Activated naive CD4-positive, alpha-beta T cell treated with anti-CD3 and anti-CD28 coated beads for 36 hours (primary cell): ENCODE measurements at regions of chr13 and their contacts with region 1.

Region 1: GRCh38 chr13:99886706-99887105 is 84.9 kb downstream of the ZIC5 start:
- DNase-seq: no peak
- H3K4me3 Mint-ChIP-seq: no peak overlapping the region
- H3K27ac Mint-ChIP-seq: no peak overlapping the region
- H3K4me1 Mint-ChIP-seq: no peaks in the 10 kb centered on the region
- H3K27me3 Mint-ChIP-seq: no peaks in the 10 kb centered on the region

Region 2: DNA sequence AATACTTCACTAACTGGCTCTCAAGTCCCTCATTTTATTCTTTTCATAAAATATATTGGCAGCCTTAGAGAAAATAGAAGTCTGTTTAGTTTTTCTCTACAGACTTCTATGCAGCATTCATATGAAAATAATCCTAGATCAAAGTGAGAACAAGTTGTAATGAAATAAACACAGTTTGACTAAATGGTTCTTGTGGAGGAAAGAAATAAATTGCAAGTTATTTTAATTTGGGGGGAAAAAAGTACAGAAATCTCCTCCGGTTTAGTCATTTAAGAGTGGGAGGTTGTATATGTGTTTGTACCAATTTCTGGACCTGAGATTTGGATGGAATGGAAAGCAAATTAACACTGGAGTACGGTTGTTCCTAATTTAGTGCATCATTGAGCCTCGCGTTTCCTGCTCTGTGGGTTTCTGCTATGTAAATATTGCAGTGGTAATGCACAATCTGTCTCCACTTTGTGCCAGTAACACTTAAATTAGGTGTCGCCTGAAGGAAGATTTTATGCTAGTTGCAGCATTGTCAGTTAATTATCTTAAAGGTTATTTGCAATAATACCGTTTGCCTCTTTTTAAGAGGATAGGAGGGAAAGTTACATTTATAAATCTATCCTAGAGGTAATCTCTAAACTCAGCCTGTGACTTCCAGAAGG is 15.3 kb before region 1 on chr13:
- CTCF ChIA-PET with region 1: no interaction called
- intact Hi-C with region 1: no loop called
- DNase-seq: no peak
- H3K4me3 Mint-ChIP-seq: no peak overlapping the region
- H3K27ac Mint-ChIP-seq: no peak overlapping the region
- H3K4me1 Mint-ChIP-seq: no peaks in the 10 kb centered on the region
- H3K27me3 Mint-ChIP-seq: no peaks in the 10 kb centered on the region

Region 3: DNA sequence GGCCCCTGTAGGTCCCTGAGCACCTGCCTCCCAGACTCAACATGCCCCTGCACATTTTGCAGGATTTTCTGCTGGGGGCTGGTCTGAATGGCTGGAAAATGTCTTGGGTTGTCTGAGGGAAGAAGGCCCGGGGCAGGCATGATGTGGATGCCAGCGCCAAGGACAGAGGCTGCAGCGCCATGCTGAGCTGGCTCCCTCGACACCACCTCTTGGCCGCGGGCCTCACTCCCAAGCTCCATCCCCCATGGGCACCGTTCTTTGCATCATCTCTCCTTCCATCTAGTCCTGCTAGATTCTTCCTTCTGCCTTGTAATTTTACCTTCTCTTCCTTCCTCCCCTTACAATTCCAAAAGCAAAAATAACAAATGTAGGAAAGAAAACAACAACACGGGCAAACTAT is 14.3 kb after region 1 on chr13:
- CTCF ChIA-PET with region 1: interaction called, 10 read pairs
- intact Hi-C with region 1: no loop called
- DNase-seq: no peak
- H3K4me3 Mint-ChIP-seq: no peak overlapping the region
- H3K27ac Mint-ChIP-seq: no peak overlapping the region
- H3K4me1 Mint-ChIP-seq: no peaks in the 10 kb centered on the region
- H3K27me3 Mint-ChIP-seq: peaks cover 50% of the 10 kb centered on the region

Region 4: DNA sequence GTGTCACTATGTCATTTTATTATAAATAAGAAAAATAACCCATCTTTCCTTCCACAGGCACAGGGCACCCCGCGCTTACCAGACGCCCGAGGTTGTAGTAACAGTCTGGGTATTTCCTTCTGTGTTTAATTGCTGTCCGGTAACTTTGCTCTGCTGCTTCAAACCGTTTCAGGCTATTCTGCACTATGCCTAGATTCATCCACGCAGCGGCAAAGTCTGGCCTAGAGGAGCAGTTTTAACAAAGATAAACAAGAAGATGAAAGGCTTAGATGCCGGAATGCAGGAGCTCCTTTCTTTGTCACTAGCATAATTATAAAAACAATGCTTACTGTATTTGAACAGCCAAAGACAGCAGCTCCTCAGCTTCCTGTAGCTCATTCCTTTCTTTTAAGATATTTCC is 738.8 kb after region 1 on chr13:
- CTCF ChIA-PET with region 1: no interaction called
- intact Hi-C with region 1: no loop called
- DNase-seq: no peak
- H3K4me3 Mint-ChIP-seq: no peak overlapping the region
- H3K27ac Mint-ChIP-seq: no peak overlapping the region
- H3K4me1 Mint-ChIP-seq: peaks cover 5% of the 10 kb centered on the region
- H3K27me3 Mint-ChIP-seq: no peaks in the 10 kb centered on the region